ENCODE measurements at regions of chr6 and their contacts with region 1.

Region 1: GRCh38 chr6:158869826-158870648 is 50.9 kb upstream of the EZR start:
- DNase-seq: peak; percentile 96
- H3K4me3 Mint-ChIP-seq: peak overlapping the region; percentile 73
- H3K27ac Mint-ChIP-seq: peak overlapping the region; percentile 96
- H3K4me1 Mint-ChIP-seq: peaks cover 33% of the 10 kb centered on the region
- H3K27me3 Mint-ChIP-seq: peaks cover 19% of the 10 kb centered on the region

Region 2: DNA sequence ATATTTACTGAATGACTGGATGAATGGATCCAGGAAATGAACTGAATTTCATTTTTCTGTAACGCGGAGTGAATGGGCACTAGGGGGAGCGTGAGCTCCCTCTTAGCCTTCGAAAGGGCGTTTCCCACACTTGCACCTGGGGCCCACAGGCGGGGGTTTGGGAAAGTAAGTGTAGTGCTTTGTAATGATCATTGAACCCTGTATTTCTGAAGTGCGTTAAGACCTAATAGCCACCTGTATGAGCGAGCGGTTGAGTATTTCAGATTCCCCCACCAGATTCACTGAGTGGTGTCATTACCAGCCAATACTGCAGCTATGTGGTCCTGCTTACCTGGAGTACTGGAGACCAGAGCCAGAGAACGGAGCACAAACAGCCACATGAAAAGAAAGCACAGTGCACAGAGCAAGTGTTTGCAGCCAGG is 209.7 kb before region 1 on chr6:
- CTCF ChIA-PET with region 1: no interaction called
- POLR2A ChIA-PET with region 1: no interaction called
- DNase-seq: peak; percentile 54
- H3K4me3 Mint-ChIP-seq: no peak overlapping the region
- H3K27ac Mint-ChIP-seq: no peak overlapping the region
- H3K4me1 Mint-ChIP-seq: peaks cover 46% of the 10 kb centered on the region
- H3K27me3 Mint-ChIP-seq: no peaks in the 10 kb centered on the region

Region 3: GRCh38 chr6:158718461-158719046 is 151.5 kb before region 1 on chr6:
- CTCF ChIA-PET with region 1: no interaction called
- POLR2A ChIA-PET with region 1: no interaction called
- DNase-seq: no peak
- H3K4me3 Mint-ChIP-seq: no peak overlapping the region
- H3K27ac Mint-ChIP-seq: peak overlapping the region; percentile 34
- H3K4me1 Mint-ChIP-seq: peaks cover 76% of the 10 kb centered on the region
- H3K27me3 Mint-ChIP-seq: no peaks in the 10 kb centered on the region

Region 4: DNA sequence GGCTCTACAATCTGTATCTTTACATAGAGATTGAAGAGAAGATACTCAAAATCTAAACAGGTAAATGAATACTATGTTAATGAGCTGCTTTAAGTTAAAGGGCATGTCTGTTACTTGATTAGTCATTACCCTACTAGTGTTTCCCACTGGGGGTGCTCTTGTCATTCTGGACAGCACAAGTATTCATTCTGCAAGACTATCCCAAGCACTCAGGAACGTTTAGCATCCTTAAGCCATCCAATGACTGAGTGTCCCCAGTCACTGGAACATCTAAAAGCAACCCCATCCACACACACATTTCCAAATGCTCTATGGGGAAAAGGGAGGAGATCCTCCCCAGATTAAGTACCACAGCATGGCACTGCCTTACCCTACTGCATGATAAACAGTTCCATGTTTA is 76.6 kb before region 1 on chr6:
- CTCF ChIA-PET with region 1: interaction called, 4 read pairs
- POLR2A ChIA-PET with region 1: interaction called, 28 read pairs
- DNase-seq: no peak
- H3K4me3 Mint-ChIP-seq: no peak overlapping the region
- H3K27ac Mint-ChIP-seq: no peak overlapping the region
- H3K4me1 Mint-ChIP-seq: peaks cover 81% of the 10 kb centered on the region
- H3K27me3 Mint-ChIP-seq: no peaks in the 10 kb centered on the region

Region 5: GRCh38 chr6:158808941-158809678 is 60.9 kb before region 1 on chr6:
- CTCF ChIA-PET with region 1: interaction called, 5 read pairs
- POLR2A ChIA-PET with region 1: interaction called, 50 read pairs
- DNase-seq: peak; percentile 36
- H3K4me3 Mint-ChIP-seq: no peak overlapping the region
- H3K27ac Mint-ChIP-seq: peak overlapping the region; percentile 67
- H3K4me1 Mint-ChIP-seq: peaks cover 94% of the 10 kb centered on the region
- H3K27me3 Mint-ChIP-seq: no peaks in the 10 kb centered on the region

Region 6: DNA sequence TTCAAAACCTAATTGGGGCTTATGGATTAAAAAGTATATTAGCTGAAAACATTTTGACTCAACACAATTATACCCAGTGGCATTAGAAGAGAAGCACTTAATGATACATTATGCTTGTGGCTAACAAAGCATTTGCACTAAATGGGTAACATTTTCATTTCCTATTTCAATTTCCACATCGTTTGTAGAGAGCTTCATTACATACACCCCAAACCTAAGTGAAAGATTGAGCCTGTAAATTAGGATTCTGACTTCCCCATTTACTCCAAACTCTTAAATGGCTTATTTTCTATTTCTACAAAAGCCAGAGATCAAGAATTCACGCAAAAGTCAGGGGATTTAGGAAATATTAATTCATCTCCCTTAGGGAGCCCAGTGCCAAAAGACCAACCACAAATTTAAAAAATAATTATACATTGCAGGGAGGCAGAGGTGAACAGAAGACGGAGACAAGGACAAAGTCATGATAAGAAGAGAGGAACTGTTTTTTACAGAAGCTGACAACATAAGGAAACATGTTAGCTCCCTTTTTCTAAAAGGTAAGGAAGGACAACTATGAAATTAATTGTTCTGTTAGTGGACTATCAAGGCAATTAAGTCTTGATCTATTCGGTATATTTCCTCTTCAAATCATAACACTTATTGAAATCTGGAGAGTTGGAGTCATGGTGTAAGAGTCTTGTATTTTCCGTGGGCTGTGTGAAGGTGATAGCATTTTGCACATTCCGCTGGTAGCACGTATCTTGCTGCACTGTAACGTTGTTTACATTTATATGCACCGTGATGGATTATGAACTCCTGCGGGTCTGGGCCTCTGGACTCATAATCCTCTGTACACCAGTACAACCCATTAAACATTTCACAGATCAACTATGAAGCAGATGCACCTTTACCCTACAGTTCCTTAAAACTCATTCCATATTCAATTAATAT is 26.0 kb before region 1 on chr6:
- CTCF ChIA-PET with region 1: interaction called, 4 read pairs
- POLR2A ChIA-PET with region 1: interaction called, 12 read pairs
- DNase-seq: no peak
- H3K4me3 Mint-ChIP-seq: no peak overlapping the region
- H3K27ac Mint-ChIP-seq: no peak overlapping the region
- H3K4me1 Mint-ChIP-seq: peaks cover 5% of the 10 kb centered on the region
- H3K27me3 Mint-ChIP-seq: peaks cover 19% of the 10 kb centered on the region

Measured in activated CD4-positive, alpha-beta memory T cell treated with anti-CD3 and anti-CD28 coated beads, Interleukin-2, amount 10 ng/mL, durations not matched to agents 7 days and 5 days (primary cell).